ENCODE measurements at regions of chr2 and their contacts with region 1.

Region 1: GRCh38 chr2:118046634-118047210 is 32.9 kb upstream of the CCDC93 start:
- DNase-seq: no peak
- ATAC-seq: no peak
- H3K4me3 Mint-ChIP-seq: no peak overlapping the region
- H3K27ac Mint-ChIP-seq: no peak overlapping the region
- H3K4me1 Mint-ChIP-seq: peaks cover 2% of the 10 kb centered on the region
- H3K27me3 Mint-ChIP-seq: peaks cover 36% of the 10 kb centered on the region
- CTCF ChIP-seq: peak; percentile 74

Region 2: DNA sequence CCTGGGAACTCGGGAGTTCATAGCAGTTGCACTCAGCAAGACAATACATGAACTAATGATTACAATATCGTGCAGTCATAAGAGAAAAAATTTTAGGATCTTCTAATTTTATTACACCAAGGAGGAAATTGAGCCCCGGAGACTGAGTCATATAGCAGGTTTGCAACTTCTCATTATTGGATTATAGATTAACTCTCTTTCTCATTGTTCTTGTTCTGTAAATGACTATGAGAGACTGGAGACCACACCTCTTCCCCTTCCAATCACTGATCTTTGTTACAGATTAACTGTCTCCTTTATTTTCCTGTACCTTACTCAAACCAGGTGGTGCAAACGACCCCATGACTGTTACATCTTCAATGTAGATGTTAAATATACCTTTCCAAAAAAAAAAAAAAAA is 668.1 kb before region 1 on chr2:
- CTCF ChIA-PET with region 1: no interaction called
- POLR2A ChIA-PET with region 1: no interaction called
- intact Hi-C with region 1: no loop called
- DNase-seq: no peak
- ATAC-seq: no peak
- H3K4me3 Mint-ChIP-seq: no peak overlapping the region
- H3K27ac Mint-ChIP-seq: no peak overlapping the region
- H3K4me1 Mint-ChIP-seq: no peaks in the 10 kb centered on the region
- H3K27me3 Mint-ChIP-seq: no peaks in the 10 kb centered on the region
- CTCF ChIP-seq: no peak

Region 3: DNA sequence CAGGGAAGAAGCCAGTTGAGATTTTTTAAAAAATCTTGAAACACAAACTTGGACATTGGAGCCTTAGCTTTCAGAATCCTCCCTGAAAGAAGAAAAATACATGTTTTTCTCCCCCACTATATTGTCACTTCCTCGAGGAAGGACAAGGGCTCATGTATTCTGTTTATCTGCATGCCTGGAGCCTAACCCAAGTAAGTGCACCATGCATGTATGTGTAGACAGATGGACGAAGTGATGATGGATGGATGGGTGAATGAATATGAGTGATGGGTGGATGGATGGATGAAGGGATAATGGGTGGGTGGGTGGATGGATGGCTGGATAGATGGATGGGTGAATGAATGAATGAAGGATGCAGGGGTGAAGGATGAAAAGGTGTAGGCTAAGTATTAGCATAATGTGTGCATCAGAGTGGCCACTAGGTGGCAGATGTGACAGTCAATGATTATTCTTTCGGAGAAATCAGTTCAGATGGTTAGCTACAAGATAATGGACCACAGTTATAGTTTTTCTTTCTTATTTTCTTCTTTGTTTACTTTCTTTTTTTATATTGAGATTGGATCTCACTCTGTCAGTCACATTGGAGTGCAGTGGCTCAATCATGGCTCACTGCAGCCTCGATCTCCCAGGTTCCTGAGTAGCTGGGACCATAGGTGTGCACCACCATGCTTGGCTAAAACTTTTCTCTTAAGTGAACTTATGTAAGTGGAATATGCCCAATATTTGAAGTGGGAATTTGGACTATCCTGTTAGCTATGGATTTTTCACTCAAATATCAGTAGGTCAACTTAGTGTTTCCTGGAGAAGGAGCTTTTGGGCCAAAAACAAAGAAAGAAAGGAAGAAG is 14.3 kb before region 1 on chr2:
- CTCF ChIA-PET with region 1: interaction called, 14 read pairs
- POLR2A ChIA-PET with region 1: no interaction called
- intact Hi-C with region 1: no loop called
- DNase-seq: peak; percentile 70
- ATAC-seq: peak; percentile 88
- H3K4me3 Mint-ChIP-seq: no peak overlapping the region
- H3K27ac Mint-ChIP-seq: no peak overlapping the region
- H3K4me1 Mint-ChIP-seq: no peaks in the 10 kb centered on the region
- H3K27me3 Mint-ChIP-seq: peaks cover 27% of the 10 kb centered on the region
- CTCF ChIP-seq: peak; percentile 74

Region 4: DNA sequence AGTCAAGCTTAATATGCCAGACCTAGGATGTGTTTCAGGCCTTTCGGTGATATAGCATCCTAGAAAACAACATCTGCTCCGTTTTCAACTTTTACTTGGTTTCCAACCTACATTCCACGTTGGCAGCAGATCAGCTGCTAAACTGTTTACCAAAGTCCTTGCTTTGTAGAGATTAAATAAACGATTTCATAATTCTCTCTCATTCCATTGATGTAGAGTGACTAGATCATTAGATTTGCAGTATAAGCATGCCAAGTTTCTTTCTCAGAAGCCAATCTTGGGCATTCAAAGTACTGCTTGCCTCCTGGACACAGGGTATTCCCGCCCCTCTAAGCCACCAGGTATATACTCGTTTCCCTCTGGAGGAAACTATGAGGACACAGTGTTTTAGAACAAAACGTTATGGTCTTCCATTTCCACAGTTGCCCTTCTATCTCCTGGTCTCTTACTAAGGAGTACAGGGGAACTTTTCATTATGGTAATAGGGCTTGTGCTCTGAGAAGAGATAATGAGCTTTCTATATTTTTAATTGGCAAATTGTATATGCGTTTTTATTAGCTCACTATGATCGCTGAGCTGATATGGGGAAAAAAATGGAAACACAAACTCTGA is 31.0 kb after region 1 on chr2:
- CTCF ChIA-PET with region 1: interaction called, 13 read pairs
- POLR2A ChIA-PET with region 1: no interaction called
- intact Hi-C with region 1: no loop called
- DNase-seq: no peak
- ATAC-seq: no peak
- H3K4me3 Mint-ChIP-seq: no peak overlapping the region
- H3K27ac Mint-ChIP-seq: no peak overlapping the region
- H3K4me1 Mint-ChIP-seq: no peaks in the 10 kb centered on the region
- H3K27me3 Mint-ChIP-seq: peaks cover 9% of the 10 kb centered on the region
- CTCF ChIP-seq: no peak

Region 5: DNA sequence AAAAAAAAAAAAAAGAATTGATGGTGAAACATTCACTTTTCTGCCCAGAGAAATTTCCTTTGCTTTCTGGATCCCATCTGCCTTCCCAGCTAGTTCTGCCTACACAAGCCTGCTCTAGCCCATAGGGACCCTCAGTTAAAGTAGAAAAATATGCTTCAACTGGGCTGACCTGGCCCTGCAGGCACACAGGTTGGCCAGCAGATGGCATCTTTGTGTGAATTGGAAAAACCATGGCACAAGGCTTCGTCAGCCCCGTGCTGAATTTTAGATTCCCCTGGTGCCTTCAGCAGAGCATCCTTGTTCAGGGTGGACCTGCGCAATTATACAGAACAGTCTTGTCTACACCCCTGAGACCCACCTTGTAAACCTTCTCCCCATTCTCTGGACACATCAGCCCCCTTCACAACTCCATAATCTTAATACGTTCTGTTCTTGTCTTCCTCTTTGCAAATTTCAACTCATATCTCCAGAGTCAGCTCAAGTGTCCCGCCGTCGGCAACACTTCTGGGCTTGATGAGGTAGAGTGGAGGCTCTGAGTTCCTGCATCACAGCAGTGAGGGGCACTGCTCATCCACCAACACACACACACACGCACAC is 156.1 kb after region 1 on chr2:
- CTCF ChIA-PET with region 1: interaction called, 19 read pairs
- POLR2A ChIA-PET with region 1: no interaction called
- intact Hi-C with region 1: no loop called
- DNase-seq: peak; percentile 71
- ATAC-seq: peak; percentile 88
- H3K4me3 Mint-ChIP-seq: no peak overlapping the region
- H3K27ac Mint-ChIP-seq: no peak overlapping the region
- H3K4me1 Mint-ChIP-seq: peaks cover 7% of the 10 kb centered on the region
- H3K27me3 Mint-ChIP-seq: peaks cover 23% of the 10 kb centered on the region
- CTCF ChIP-seq: peak; percentile 78

Region 6: DNA sequence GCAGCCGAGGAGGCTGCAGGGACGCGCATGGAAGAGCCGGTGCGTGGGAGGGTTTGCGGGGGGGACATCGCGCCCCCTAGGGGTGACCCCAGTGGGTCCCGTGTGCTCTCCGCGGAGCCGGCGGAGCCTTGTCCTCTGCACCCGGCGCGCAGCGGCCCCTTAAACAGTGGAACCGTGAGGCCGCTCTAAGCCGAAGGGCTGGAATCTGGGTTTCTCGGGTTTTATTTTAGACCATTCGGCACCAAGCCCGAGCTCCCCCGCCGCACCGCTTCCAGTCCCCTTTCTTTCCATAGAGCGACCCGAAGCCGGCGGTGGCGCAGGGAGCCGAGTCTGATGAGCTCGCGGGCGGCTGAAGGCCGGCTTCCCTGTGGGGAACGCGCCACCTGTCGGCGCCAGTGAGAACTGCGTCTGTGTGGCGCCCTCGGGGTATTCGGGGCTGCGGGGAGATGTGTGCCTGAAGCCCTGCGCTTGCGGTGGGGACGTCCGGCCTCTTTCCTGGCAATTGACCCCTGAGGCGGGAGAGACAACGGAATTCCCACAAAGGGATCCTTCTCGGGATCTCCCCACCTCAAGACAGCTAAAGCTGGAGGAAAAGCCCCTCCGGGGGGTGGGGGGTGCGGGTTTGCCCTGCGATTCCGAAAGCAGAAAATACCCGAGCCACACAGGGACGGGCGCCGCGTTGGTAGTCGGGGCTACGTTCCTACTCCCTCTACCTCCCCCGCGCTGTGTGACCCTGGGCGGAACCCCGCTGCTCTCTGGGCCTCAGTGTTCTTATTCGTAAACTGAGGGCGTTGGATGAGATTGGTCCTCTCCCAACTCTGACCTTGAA is 808.9 kb after region 1 on chr2:
- CTCF ChIA-PET with region 1: interaction called, 7 read pairs
- POLR2A ChIA-PET with region 1: no interaction called
- intact Hi-C with region 1: loop called (anchors 5 kb)
- DNase-seq: peak; percentile 86
- ATAC-seq: peak; percentile 95
- H3K4me3 Mint-ChIP-seq: peak overlapping the region; percentile 48
- H3K27ac Mint-ChIP-seq: no peak overlapping the region
- H3K4me1 Mint-ChIP-seq: peaks cover 23% of the 10 kb centered on the region
- H3K27me3 Mint-ChIP-seq: peaks cover 75% of the 10 kb centered on the region
- CTCF ChIP-seq: peak; percentile 96

Measured in activated CD8-positive, alpha-beta T cell treated with anti-CD3 and anti-CD28 coated beads for 36 hours (primary cell).